ENCODE measurements at regions of chr15 and their contacts with region 1.

Region 1: GRCh38 chr15:75578948-75579920 is at the start of gene PTPN9:
- DNase-seq: peak; percentile 25 to 75 (median 56)
- ATAC-seq: peak; percentile 82 to 88 (median 84)
- H3K4me3 ChIP-seq: peak within 1 kb of the TSS; percentile 79 to 83
- H3K4me3 Mint-ChIP-seq: peak within 1 kb of the TSS; percentile 89 to 93 (median 90)
- H3K27ac ChIP-seq: peak within 1 kb of the TSS; percentile 71
- H3K27ac Mint-ChIP-seq: peak within 1 kb of the TSS; percentile 92 to 93
- H3K4me1 ChIP-seq: peaks cover 4 to 21% of the 10 kb centered on the region in 2 experiments
- H3K4me1 Mint-ChIP-seq: peaks cover 20 to 26% (median 24%) of the 10 kb centered on the region in 3 donors
- H3K27me3 ChIP-seq: no peaks in the 10 kb centered on the region
- H3K27me3 Mint-ChIP-seq: no peaks in the 10 kb centered on the region
- total RNA-seq, gene PTPN9: 12.7 to 19.6 (median 16.3) TPM

Region 2: DNA sequence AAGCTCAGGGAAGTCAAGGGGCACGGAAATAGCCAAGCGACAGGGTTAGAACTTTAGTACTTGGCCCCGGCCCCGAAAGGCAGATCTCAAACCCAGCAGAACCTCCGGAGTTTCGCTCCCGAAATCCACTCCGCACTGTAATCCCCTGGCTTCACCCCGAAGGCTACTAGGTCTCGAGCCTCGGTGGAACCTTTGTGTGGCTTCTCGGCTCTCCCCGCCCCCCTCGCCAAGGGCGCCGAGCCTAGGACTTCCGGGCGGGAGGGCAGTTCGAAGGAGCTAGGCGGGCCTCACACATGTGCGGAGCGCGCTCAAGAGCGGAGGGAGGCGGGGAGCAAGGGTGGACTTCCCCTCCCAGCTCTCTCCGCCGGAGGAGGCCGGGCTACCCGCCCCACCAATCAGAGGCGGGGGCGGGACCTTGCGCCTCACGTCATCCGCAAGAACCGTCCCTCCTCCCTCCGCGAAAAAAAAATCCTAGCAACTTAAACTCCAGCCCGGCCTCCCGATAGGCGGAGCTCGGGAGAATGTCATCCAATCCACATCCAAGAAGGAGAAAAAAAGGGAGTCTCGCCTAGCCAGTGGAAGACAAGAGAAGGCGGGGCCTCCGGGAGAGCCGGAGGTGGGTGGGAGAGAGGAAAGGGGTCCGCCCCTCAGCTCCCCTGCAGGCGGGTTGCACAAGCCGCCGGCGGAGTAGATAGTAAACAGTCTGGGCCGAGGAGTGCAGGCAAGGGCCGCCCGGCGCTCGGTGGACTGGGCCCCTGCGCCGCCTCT is 125.3 kb before region 1 on chr15:
- CTCF ChIA-PET with region 1: no interaction called
- POLR2A ChIA-PET with region 1: interaction called in 1 of 2 experiments, 10 read pairs
- DNase-seq: peak; percentile 84 to 99 (median 97)
- ATAC-seq: peak; percentile 41 to 48 (median 45)
- H3K4me3 ChIP-seq: peak overlapping the region; percentile 78 to 93
- H3K4me3 Mint-ChIP-seq: peak overlapping the region; percentile 94 to 100 (median 95)
- H3K27ac ChIP-seq: peak overlapping the region; percentile 88
- H3K27ac Mint-ChIP-seq: peak overlapping the region; percentile 98 to 99
- H3K4me1 ChIP-seq: peaks cover 22 to 41% of the 10 kb centered on the region in 2 experiments
- H3K4me1 Mint-ChIP-seq: peaks cover 38 to 46% (median 40%) of the 10 kb centered on the region in 3 donors
- H3K27me3 ChIP-seq: no peaks in the 10 kb centered on the region
- H3K27me3 Mint-ChIP-seq: no peaks in the 10 kb centered on the region

Region 3: GRCh38 chr15:75468913-75469598 is 110.2 kb before region 1 on chr15:
- CTCF ChIA-PET with region 1: interaction called in 1 of 2 experiments, 10 read pairs
- POLR2A ChIA-PET with region 1: interaction called in 1 of 2 experiments, 3 read pairs
- DNase-seq: no peak
- ATAC-seq: no peak
- H3K4me3 ChIP-seq: no peak overlapping the region
- H3K4me3 Mint-ChIP-seq: no peak overlapping the region
- H3K27ac ChIP-seq: no peak overlapping the region
- H3K27ac Mint-ChIP-seq: no peak overlapping the region
- H3K4me1 ChIP-seq: no peaks in the 10 kb centered on the region
- H3K4me1 Mint-ChIP-seq: no peaks in the 10 kb centered on the region
- H3K27me3 ChIP-seq: no peaks in the 10 kb centered on the region
- H3K27me3 Mint-ChIP-seq: no peaks in the 10 kb centered on the region

Region 4: GRCh38 chr15:75554717-75555116 is 24.5 kb before region 1 on chr15:
- CTCF ChIA-PET with region 1: no interaction called
- POLR2A ChIA-PET with region 1: interaction called, 5 to 12 read pairs
- DNase-seq: no peak
- ATAC-seq: no peak
- H3K4me3 ChIP-seq: no peak overlapping the region
- H3K4me3 Mint-ChIP-seq: no peak overlapping the region
- H3K27ac ChIP-seq: no peak overlapping the region
- H3K27ac Mint-ChIP-seq: no peak overlapping the region
- H3K4me1 ChIP-seq: no peaks in the 10 kb centered on the region
- H3K4me1 Mint-ChIP-seq: peaks cover 5 to 13% (median 9%) of the 10 kb centered on the region in 3 donors
- H3K27me3 ChIP-seq: no peaks in the 10 kb centered on the region
- H3K27me3 Mint-ChIP-seq: no peaks in the 10 kb centered on the region

Region 5: DNA sequence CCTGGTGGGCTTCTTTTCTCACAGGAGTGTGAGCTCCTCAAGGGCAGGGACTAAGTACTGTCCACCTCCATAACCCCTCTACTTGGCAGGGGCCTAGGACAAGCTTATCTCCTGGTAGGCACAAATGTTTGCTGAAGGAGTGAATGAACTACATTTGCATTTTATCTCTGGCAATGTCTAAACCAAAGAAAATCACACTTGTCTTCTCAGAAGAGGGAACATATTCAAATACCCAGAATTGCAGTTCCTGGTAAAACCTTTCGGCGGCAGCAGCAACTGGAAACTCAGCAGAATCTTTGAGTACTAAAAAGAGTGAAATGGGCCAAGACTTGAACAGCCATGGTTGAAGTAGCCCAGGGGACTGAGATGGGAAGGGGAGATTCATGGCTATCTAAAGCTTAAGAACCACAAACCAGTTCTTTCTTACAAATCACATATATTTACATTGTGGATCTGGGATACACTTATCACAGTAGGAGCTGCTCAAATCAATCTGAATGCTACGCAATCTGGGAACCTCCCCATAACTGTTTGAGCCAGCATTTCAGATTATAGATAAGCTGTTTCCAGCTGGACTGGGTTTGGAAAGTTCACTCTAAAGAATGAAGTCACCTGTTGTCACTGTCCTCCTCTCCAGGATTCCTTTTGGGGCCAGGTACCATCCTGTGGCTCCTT is 18.6 kb after region 1 on chr15:
- CTCF ChIA-PET with region 1: interaction called in 1 of 2 experiments, 11 read pairs
- POLR2A ChIA-PET with region 1: no interaction called
- DNase-seq: peak in 22 of 35 experiments; percentile 7 to 56 (median 20)
- ATAC-seq: peak; percentile 41 to 50 (median 47)
- H3K4me3 ChIP-seq: no peak overlapping the region
- H3K4me3 Mint-ChIP-seq: peak overlapping the region in 2 of 3 donors; percentile 7 to 10
- H3K27ac ChIP-seq: no peak overlapping the region
- H3K27ac Mint-ChIP-seq: peak overlapping the region in 1 of 2 donors; percentile 65
- H3K4me1 ChIP-seq: peaks cover 3 to 20% of the 10 kb centered on the region in 2 experiments
- H3K4me1 Mint-ChIP-seq: peaks cover 20 to 26% (median 25%) of the 10 kb centered on the region in 3 donors
- H3K27me3 ChIP-seq: no peaks in the 10 kb centered on the region
- H3K27me3 Mint-ChIP-seq: no peaks in the 10 kb centered on the region